ENCODE measurements at regions of chr4 and their contacts with region 1.

Region 1: GRCh38 chr4:74578329-74578728 is 133.4 kb downstream of the AREG start:
- DNase-seq: no peak
- H3K4me3 ChIP-seq: no peak overlapping the region
- H3K27ac ChIP-seq: no peak overlapping the region
- H3K4me1 ChIP-seq: no peaks in the 10 kb centered on the region
- CTCF ChIP-seq: no peak

Region 2: DNA sequence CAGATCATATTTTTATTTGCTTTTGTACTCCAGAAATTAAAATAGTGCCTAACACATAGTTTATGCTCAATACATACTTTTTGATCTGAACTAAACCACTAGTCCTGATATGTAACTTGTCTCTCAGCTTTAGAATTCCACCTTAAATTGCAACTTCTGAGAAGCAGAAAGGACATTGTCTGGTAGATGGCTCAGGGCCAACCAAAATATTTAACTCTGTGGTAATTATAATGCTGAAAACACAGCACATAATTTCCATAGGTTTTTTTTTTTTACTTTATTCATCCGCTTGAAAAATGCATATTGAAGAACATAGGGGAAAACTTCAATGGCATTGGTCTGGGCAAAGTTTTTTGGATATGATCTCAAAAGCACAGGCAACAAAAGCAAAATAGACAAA is 74.1 kb before region 1 on chr4:
- CTCF ChIA-PET with region 1: no interaction called
- POLR2A ChIA-PET with region 1: no interaction called
- intact Hi-C with region 1: loop called (anchors 2 kb)
- DNase-seq: no peak
- H3K4me3 ChIP-seq: no peak overlapping the region
- H3K27ac ChIP-seq: no peak overlapping the region
- H3K4me1 ChIP-seq: no peaks in the 10 kb centered on the region
- CTCF ChIP-seq: no peak

Measured in OCI-LY7 (cell line).